ENCODE measurements at regions of chr1 and their contacts with region 1.

Region 1: DNA sequence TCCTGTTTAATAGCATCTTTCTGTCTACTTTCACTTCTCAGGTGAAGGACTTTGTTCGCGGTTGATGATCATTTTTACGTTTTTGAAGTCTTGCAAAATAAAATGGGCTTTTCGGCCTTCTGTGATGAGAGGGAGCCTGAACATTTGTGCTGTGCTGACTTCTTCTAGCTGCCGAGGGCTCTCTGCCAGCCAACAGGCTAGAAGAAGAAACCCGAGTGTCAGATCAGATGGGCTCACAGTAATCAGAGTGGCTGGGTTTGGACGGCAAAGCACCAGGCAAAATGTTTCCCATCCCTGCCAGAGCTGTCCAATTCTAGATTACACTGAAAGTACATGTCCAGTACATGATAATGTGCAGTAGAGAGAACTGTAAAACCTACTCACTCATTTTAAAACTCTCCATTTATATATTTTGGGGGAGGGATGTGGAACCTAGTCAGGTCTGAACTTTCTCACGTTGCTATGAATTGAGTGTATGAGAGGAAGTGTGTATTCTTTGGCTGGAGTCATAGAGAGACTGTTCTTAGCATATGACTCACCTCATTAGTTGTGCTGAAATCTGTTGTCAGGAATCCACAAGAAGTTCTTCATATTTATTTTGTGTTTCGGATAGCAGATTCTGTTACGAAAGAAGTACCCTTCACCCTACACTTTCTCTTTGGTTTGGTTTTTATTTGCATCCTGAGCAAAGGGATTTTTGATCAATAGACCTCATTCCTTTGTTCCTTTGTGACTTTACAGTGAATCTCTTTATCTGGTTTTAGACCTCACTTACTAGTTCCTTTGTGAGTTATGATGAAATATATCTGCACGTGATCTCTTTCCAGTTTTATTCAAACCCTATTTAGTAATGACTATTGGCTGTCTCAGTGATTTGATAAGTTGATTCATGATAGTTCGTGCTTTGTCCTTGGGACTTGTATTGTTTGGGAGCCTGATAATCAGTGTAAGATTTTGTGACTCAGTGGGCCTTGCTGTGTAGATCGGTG is 4.8 kb downstream of the ATP1A1 start:
- DNase-seq: peak; percentile 55
- H3K4me3 Mint-ChIP-seq: peak overlapping the region; percentile 69
- H3K27ac Mint-ChIP-seq: peak overlapping the region; percentile 83
- H3K4me1 Mint-ChIP-seq: peaks cover 77% of the 10 kb centered on the region
- H3K27me3 Mint-ChIP-seq: no peaks in the 10 kb centered on the region

Region 2: DNA sequence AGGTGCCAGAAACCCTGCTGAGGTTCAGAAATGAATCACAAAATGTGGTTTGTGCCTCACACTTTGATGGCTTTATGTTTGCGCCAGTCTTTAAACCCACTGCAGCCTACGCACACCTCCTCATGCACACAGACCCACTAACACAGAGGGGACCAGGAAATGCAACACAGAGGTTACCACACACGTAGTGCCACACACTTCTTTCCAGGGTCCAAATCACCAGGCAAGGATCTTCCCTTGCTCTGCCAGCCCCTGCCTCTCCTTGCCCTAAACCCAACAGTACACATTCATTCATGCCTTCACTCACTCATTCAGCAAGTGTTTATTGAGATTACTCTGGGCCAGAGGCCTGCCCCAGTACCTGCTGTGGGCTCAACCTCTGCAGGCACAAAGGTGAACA is 249.2 kb before region 1 on chr1:
- CTCF ChIA-PET with region 1: no interaction called
- POLR2A ChIA-PET with region 1: no interaction called
- intact Hi-C with region 1: loop called (anchors 5 kb)
- DNase-seq: peak; percentile 75
- H3K4me3 Mint-ChIP-seq: no peak overlapping the region
- H3K27ac Mint-ChIP-seq: peak overlapping the region; percentile 23
- H3K4me1 Mint-ChIP-seq: peaks cover 35% of the 10 kb centered on the region
- H3K27me3 Mint-ChIP-seq: peaks cover 19% of the 10 kb centered on the region

Region 3: DNA sequence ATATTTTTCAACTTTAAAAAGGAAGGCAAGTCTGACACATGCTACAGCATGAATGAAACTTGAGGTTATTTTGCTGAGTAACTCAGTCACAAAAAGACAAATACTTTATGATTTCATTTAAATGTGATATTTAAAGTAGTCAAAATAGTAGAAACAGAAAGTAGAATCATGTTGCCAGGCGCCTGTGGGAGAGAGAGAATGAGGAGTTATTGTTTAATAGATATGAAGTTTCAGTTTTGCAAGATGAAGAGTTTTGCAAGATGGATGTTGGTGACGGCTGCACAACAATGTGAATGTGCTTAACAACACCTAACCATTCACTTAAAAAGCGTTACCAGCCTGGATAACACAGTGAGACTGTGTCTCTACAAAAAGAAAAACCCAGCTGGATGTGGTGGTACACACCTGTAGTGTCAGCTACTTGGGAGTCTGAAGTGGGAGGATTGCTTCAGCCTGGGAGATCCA is 25.5 kb before region 1 on chr1:
- CTCF ChIA-PET with region 1: no interaction called
- POLR2A ChIA-PET with region 1: interaction called, 3 read pairs
- intact Hi-C with region 1: loop called (anchors 1 kb)
- DNase-seq: peak; percentile 39
- H3K4me3 Mint-ChIP-seq: peak overlapping the region; percentile 44
- H3K27ac Mint-ChIP-seq: peak overlapping the region; percentile 19
- H3K4me1 Mint-ChIP-seq: peaks cover 45% of the 10 kb centered on the region
- H3K27me3 Mint-ChIP-seq: no peaks in the 10 kb centered on the region

Region 4: GRCh38 chr1:116435806-116436610 is 58.2 kb after region 1 on chr1:
- CTCF ChIA-PET with region 1: no interaction called
- POLR2A ChIA-PET with region 1: no interaction called
- intact Hi-C with region 1: loop called (anchors 1 kb)
- DNase-seq: no peak
- H3K4me3 Mint-ChIP-seq: no peak overlapping the region
- H3K27ac Mint-ChIP-seq: no peak overlapping the region
- H3K4me1 Mint-ChIP-seq: no peaks in the 10 kb centered on the region
- H3K27me3 Mint-ChIP-seq: no peaks in the 10 kb centered on the region

Region 5: GRCh38 chr1:116556289-116557006 is 178.6 kb after region 1 on chr1:
- CTCF ChIA-PET with region 1: interaction called, 3 read pairs
- POLR2A ChIA-PET with region 1: interaction called, 4 read pairs
- intact Hi-C with region 1: loop called (anchors 1 kb)
- DNase-seq: peak; percentile 91
- H3K4me3 Mint-ChIP-seq: peak overlapping the region; percentile 9
- H3K27ac Mint-ChIP-seq: peak overlapping the region; percentile 91
- H3K4me1 Mint-ChIP-seq: peaks cover 80% of the 10 kb centered on the region
- H3K27me3 Mint-ChIP-seq: no peaks in the 10 kb centered on the region

Region 6: GRCh38 chr1:116826818-116827606 is 449.2 kb after region 1 on chr1:
- CTCF ChIA-PET with region 1: no interaction called
- POLR2A ChIA-PET with region 1: no interaction called
- intact Hi-C with region 1: loop called (anchors 5 kb)
- DNase-seq: peak; percentile 90
- H3K4me3 Mint-ChIP-seq: peak overlapping the region; percentile 79
- H3K27ac Mint-ChIP-seq: peak overlapping the region; percentile 91
- H3K4me1 Mint-ChIP-seq: peaks cover 77% of the 10 kb centered on the region
- H3K27me3 Mint-ChIP-seq: no peaks in the 10 kb centered on the region

Measured in activated CD4-positive, alpha-beta memory T cell treated with anti-CD3 and anti-CD28 coated beads for 36 hours (primary cell).